ENCODE measurements at regions of chr10 and their contacts with region 1.

Region 1: GRCh38 chr10:129936266-129936922 is 27.7 kb downstream of the EBF3 start:
- DNase-seq: no peak
- ATAC-seq: no peak
- H3K4me3 ChIP-seq: no peak overlapping the region
- H3K27ac ChIP-seq: no peak overlapping the region
- H3K4me1 ChIP-seq: no peaks in the 10 kb centered on the region
- H3K27me3 ChIP-seq: no peaks in the 10 kb centered on the region
- CTCF ChIP-seq: no peak

Region 2: DNA sequence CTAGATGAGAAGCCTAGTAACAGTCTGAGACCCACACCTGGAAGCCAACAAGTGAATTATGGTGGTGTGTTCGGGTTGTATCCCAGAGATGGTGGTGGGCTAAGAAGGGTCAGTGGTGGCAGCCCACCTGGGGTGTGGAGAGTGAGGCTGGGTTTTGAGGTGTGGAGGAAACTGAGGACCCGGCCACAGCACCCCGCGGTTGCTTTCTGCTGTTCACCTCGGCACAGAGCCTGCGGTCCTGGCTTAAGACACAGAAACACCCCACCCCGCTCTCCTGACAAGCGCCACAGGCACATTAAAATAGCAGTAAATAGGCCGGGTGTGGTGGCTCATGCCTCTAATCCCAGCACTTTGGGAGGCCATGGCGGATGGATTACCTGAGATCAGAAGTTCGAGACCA is 594.9 kb after region 1 on chr10:
- CTCF ChIA-PET with region 1: no interaction called
- POLR2A ChIA-PET with region 1: no interaction called
- in situ Hi-C with region 1: no loop called
- intact Hi-C with region 1: loop called (anchors 5 kb)
- DNase-seq: no peak
- ATAC-seq: no peak
- H3K4me3 ChIP-seq: no peak overlapping the region
- H3K27ac ChIP-seq: no peak overlapping the region
- H3K4me1 ChIP-seq: no peaks in the 10 kb centered on the region
- H3K27me3 ChIP-seq: peaks cover 15% of the 10 kb centered on the region
- CTCF ChIP-seq: no peak

Measured in Panc1 (cell line).